HCT116 (cell line): ENCODE measurements at regions of chr6 and their contacts with region 1.

Region 1: GRCh38 chr6:165729307-165729936 is 66.4 kb upstream of the PDE10A start:
- DNase-seq: peak; percentile 6
- ATAC-seq: peak; percentile 67
- H3K4me3 ChIP-seq: no peak overlapping the region
- H3K27ac ChIP-seq: no peak overlapping the region
- H3K4me1 ChIP-seq: no peaks in the 10 kb centered on the region
- H3K27me3 ChIP-seq: no peaks in the 10 kb centered on the region
- CTCF ChIP-seq: peak; percentile 24 to 66 (median 55); a peak in 5 of 6 replicates
- POLR2A ChIP-seq: no peak
- RAD21 ChIP-seq: peak; percentile 39; the same call in 1 of the 2 replicates

Region 2: GRCh38 chr6:165676435-165677068 is 52.9 kb before region 1 on chr6:
- CTCF ChIA-PET with region 1: no interaction called
- POLR2A ChIA-PET with region 1: no interaction called
- RAD21 ChIA-PET with region 1: no interaction called
- intact Hi-C with region 1: no loop called
- DNase-seq: no peak
- ATAC-seq: no peak
- H3K4me3 ChIP-seq: no peak overlapping the region
- H3K27ac ChIP-seq: no peak overlapping the region
- H3K4me1 ChIP-seq: no peaks in the 10 kb centered on the region
- H3K27me3 ChIP-seq: no peaks in the 10 kb centered on the region
- CTCF ChIP-seq: no peak
- POLR2A ChIP-seq: no peak
- RAD21 ChIP-seq: no peak

Region 3: DNA sequence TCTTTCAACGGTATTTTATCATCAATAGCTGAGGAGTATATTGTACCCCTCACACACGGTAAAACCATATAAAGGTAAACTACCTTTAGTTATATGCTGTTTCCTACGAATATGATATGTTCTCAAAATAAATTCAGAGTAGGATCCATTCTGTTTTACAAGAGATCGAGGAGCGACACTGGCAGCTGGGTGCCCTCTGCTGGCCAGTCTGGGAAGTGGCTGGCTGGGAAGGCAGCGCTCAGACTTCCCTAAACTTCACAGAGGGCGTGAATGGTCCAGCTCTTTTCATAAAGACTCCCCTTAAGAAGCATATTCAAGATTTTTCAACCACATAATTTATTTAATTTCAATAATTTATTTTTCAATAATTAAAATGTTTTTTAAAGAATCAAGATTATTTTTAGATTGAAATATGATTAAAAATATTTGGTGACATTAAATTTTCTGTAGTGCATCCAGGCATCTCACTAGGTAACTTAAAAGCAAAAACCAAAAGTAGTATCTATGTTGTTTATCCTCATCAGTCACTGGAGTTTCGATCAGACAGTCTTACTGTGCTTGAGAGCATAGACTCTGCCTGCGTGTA is 121.1 kb after region 1 on chr6:
- CTCF ChIA-PET with region 1: interaction called, 3 read pairs
- POLR2A ChIA-PET with region 1: no interaction called
- RAD21 ChIA-PET with region 1: no interaction called
- intact Hi-C with region 1: loop called (anchors 1 kb)
- DNase-seq: peak; percentile 12
- ATAC-seq: peak; percentile 86
- H3K4me3 ChIP-seq: no peak overlapping the region
- H3K27ac ChIP-seq: no peak overlapping the region
- H3K4me1 ChIP-seq: no peaks in the 10 kb centered on the region
- H3K27me3 ChIP-seq: no peaks in the 10 kb centered on the region
- CTCF ChIP-seq: peak; percentile 59 to 93 (median 87)
- POLR2A ChIP-seq: no peak
- RAD21 ChIP-seq: peak; percentile 71

Region 4: GRCh38 chr6:166078294-166078693 is 348.9 kb after region 1 on chr6:
- CTCF ChIA-PET with region 1: no interaction called
- POLR2A ChIA-PET with region 1: no interaction called
- RAD21 ChIA-PET with region 1: no interaction called
- intact Hi-C with region 1: no loop called
- DNase-seq: no peak
- ATAC-seq: no peak
- H3K4me3 ChIP-seq: no peak overlapping the region
- H3K27ac ChIP-seq: no peak overlapping the region
- H3K4me1 ChIP-seq: no peaks in the 10 kb centered on the region
- H3K27me3 ChIP-seq: no peaks in the 10 kb centered on the region
- CTCF ChIP-seq: no peak
- POLR2A ChIP-seq: no peak
- RAD21 ChIP-seq: no peak

Region 5: GRCh38 chr6:166106076-166106686 is 376.8 kb after region 1 on chr6:
- CTCF ChIA-PET with region 1: interaction called, 5 read pairs
- POLR2A ChIA-PET with region 1: no interaction called
- RAD21 ChIA-PET with region 1: no interaction called
- intact Hi-C with region 1: loop called (anchors 2 kb)
- DNase-seq: peak; percentile 49
- ATAC-seq: peak; percentile 92
- H3K4me3 ChIP-seq: no peak overlapping the region
- H3K27ac ChIP-seq: no peak overlapping the region
- H3K4me1 ChIP-seq: no peaks in the 10 kb centered on the region
- H3K27me3 ChIP-seq: no peaks in the 10 kb centered on the region
- CTCF ChIP-seq: peak; percentile 78 to 96 (median 83)
- POLR2A ChIP-seq: no peak
- RAD21 ChIP-seq: peak; percentile 95